IMR-90 (cell line): ENCODE measurements at regions of chr9 and their contacts with region 1.

Region 1: GRCh38 chr9:68489646-68490045 is 51.0 kb downstream of the TMEM252 start:
- DNase-seq: peak; percentile 85
- ATAC-seq: peak; percentile 48
- H3K4me3 ChIP-seq: no peak overlapping the region
- H3K27ac ChIP-seq: no peak overlapping the region
- H3K4me1 ChIP-seq: peaks cover 6% of the 10 kb centered on the region; the same call in 1 of the 2 replicates
- H3K27me3 ChIP-seq: no peaks in the 10 kb centered on the region
- CTCF ChIP-seq: no peak
- POLR2A ChIP-seq: no peak
- RAD21 ChIP-seq: no peak

Region 2: DNA sequence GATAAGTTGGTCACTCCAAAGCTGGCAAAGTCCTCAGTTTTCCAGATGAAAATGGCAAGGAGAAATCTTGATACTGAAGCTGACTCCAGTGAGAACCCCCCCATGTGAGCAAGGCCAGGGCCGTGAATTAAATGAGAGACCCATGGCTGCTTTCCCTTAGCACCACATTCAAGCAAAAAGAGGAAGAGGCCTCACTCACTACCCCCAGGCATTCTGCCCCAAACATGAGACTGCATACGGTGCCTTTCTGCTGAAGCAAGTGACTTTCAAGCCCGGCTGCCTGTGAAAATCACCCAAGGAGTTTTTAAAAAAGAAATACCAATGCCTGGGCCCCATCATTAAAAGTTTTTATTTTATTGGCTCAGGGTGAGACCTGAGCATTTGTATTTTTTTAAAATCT is 15.9 kb before region 1 on chr9:
- CTCF ChIA-PET with region 1: no interaction called
- POLR2A ChIA-PET with region 1: interaction called, 10 read pairs
- dilution Hi-C with region 1: no loop called
- in situ Hi-C with region 1: no loop called
- intact Hi-C with region 1: no loop called
- DNase-seq: no peak
- ATAC-seq: no peak
- H3K4me3 ChIP-seq: no peak overlapping the region
- H3K27ac ChIP-seq: no peak overlapping the region
- H3K4me1 ChIP-seq: no peaks in the 10 kb centered on the region
- H3K27me3 ChIP-seq: no peaks in the 10 kb centered on the region
- CTCF ChIP-seq: no peak
- POLR2A ChIP-seq: no peak
- RAD21 ChIP-seq: no peak